ENCODE measurements at regions of chr11 and their contacts with region 1.

Region 1: GRCh38 chr11:45110562-45110961 is 35.9 kb upstream of the PRDM11 start:
- DNase-seq: peak; percentile 76
- H3K4me3 ChIP-seq: peak overlapping the region in 1 of 2 experiments; percentile 20; a peak in 1 of 4 replicates
- H3K27ac ChIP-seq: no peak overlapping the region
- H3K4me1 ChIP-seq: no peaks in the 10 kb centered on the region
- H3K27me3 ChIP-seq: peaks cover 18% of the 10 kb centered on the region; the same call in 1 of the 2 replicates
- CTCF ChIP-seq: peak; percentile 75
- EP300 ChIP-seq: no peak
- RAD21 ChIP-seq: peak; percentile 95

Region 2: GRCh38 chr11:44823006-44823405 is 287.6 kb before region 1 on chr11:
- CTCF ChIA-PET with region 1: no interaction called
- POLR2A ChIA-PET with region 1: no interaction called
- DNase-seq: no peak
- H3K4me3 ChIP-seq: no peak overlapping the region
- H3K27ac ChIP-seq: no peak overlapping the region; a peak in 1 of 4 replicates
- H3K4me1 ChIP-seq: peaks cover 0 to 25% of the 10 kb centered on the region in 2 experiments; a peak in 1 of 4 replicates
- H3K27me3 ChIP-seq: no peaks in the 10 kb centered on the region
- CTCF ChIP-seq: peak; percentile 41
- EP300 ChIP-seq: no peak
- RAD21 ChIP-seq: no peak

Region 3: DNA sequence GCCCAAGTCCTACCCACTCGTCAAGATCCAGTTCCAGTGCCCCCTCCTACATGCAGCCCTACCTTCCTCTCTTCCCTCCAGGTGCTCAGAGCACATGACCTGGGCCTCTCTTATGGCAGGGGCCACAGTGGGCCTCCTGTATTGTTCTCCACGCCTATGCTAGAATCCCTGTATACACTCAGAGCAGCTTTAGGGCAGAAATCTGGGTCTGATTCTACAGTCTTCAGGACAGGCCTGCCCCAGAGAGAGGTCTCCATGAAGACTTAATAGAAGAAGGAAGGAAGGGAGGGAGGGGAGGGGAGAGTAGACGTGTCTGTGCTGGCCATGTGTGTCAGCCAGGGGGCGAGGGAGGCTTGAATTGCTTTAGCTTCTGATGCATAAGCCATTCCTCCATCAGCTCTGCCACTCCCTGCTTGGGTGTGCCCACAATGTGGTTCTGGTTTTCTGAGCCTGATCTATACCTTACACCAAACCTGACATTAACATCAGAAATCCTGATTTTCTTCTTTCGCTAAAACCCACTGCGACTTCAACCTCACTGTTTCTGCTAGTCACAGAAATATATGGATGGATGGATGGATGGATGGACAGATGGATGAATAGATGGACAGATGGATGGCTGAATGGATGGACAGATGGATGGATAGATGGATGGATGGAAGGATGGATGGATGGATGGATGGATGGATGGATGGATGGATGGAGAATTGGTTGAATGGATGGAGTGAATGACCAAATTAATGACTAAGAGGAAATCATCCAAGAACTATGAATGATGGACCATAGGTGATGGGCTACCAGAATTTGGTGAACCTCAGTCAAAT is 20.7 kb before region 1 on chr11:
- CTCF ChIA-PET with region 1: interaction called, 42 read pairs
- POLR2A ChIA-PET with region 1: no interaction called
- DNase-seq: no peak
- H3K4me3 ChIP-seq: no peak overlapping the region
- H3K27ac ChIP-seq: peak overlapping the region in 1 of 2 experiments; percentile 38; a peak in 1 of 4 replicates
- H3K4me1 ChIP-seq: peaks cover 0 to 9% of the 10 kb centered on the region in 2 experiments; a peak in 1 of 4 replicates
- H3K27me3 ChIP-seq: no peaks in the 10 kb centered on the region; the same call in 1 of the 2 replicates
- CTCF ChIP-seq: no peak
- EP300 ChIP-seq: no peak
- RAD21 ChIP-seq: no peak

Region 4: DNA sequence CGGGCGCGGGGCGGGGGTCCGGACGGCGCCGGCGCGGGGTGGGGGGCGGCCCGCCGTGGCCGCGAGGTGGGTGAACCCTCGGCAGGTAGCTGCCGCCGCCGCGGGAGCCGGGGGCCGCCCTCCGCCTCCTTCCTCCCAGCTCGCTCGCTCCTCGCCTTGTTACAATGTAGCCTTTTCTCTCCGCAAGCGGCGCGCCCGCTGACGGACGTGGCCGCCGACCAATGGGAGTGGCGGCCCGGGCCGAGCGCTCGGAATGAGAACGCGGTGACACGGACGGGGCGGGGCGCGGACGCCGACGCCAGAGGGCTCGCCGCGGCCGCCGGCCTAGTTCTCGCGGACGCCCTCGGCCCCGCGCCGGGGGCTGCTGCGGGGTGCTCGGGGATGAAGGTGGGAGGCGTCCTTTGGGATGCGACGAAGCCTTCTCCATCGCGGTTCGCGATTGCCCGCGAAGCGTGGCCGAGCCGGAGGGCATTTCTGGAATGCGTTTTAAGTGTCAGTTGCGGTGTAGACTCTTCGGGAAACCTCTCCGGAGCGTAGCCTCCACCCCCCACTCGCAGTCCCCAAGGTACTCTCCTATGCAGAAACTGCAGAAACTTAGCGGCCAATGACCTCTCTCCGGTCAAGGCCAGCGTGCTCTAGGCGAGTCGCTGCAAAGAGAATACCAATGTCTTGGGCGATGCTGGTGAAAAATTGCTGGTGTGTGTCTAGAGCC is 36.6 kb after region 1 on chr11:
- CTCF ChIA-PET with region 1: interaction called, 11 read pairs
- POLR2A ChIA-PET with region 1: no interaction called
- DNase-seq: peak; percentile 98
- H3K4me3 ChIP-seq: peak overlapping the region; percentile 74 to 81
- H3K27ac ChIP-seq: peak overlapping the region; percentile 68 to 95
- H3K4me1 ChIP-seq: peaks cover 15 to 28% of the 10 kb centered on the region in 2 experiments; a peak in 2 of 4 replicates
- H3K27me3 ChIP-seq: no peaks in the 10 kb centered on the region; the same call in 1 of the 2 replicates
- CTCF ChIP-seq: no peak
- EP300 ChIP-seq: 0 out of 4 replicates have a peak, but pooled peaks of 1 of the 2 experiments have one; percentile 4
- RAD21 ChIP-seq: no peak

Region 5: GRCh38 chr11:45233121-45233803 is 122.7 kb after region 1 on chr11:
- CTCF ChIA-PET with region 1: interaction called, 43 read pairs
- POLR2A ChIA-PET with region 1: no interaction called
- DNase-seq: peak; percentile 91
- H3K4me3 ChIP-seq: no peak overlapping the region
- H3K27ac ChIP-seq: no peak overlapping the region
- H3K4me1 ChIP-seq: peaks cover 0 to 2% of the 10 kb centered on the region in 2 experiments; a peak in 1 of 4 replicates
- H3K27me3 ChIP-seq: no peaks in the 10 kb centered on the region; the same call in 1 of the 2 replicates
- CTCF ChIP-seq: peak; percentile 79
- EP300 ChIP-seq: no peak
- RAD21 ChIP-seq: peak; percentile 53

Region 6: DNA sequence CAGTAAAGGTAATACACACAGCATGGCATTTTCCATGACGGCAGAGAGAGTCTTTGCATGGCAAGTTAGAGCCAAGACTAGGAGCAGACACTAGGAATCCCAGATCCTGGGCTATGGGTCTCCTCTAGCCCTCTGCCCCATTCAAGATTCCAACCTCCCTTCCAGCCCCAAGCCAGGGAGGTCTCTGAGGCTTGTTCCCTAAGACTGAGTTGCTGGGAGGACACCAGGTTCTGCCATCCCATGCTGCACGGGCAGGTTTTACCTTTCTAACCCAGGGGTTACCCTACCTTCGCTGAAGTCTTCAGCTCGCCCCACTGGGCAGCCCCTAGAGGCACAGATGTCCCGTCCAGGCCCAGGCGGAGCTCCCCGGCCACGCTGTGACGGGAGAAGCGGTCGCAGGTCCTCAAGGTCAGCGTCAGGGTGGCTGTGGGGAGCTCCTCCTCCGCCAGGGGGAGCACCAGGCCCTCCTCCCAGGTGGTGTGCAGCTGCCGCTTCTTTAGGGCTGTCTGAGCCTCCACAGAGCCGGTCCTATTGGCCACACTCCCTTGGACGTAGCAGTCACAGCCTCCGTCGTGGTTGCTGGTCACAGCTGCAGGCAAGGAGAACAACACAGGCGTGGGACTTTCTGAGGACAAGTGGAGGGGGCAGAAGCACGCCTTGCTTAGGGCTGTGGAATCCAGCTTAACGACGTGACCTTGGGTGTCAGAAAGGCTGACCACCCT is 141.7 kb after region 1 on chr11:
- CTCF ChIA-PET with region 1: interaction called, 14 read pairs
- POLR2A ChIA-PET with region 1: no interaction called
- DNase-seq: peak; percentile 63
- H3K4me3 ChIP-seq: no peak overlapping the region
- H3K27ac ChIP-seq: no peak overlapping the region
- H3K4me1 ChIP-seq: peaks cover 0 to 3% of the 10 kb centered on the region in 2 experiments; a peak in 1 of 4 replicates
- H3K27me3 ChIP-seq: peaks cover 3% of the 10 kb centered on the region; the same call in 1 of the 2 replicates
- CTCF ChIP-seq: peak; percentile 66
- EP300 ChIP-seq: no peak
- RAD21 ChIP-seq: peak; percentile 37; the same call in 1 of the 2 replicates

Region 7: DNA sequence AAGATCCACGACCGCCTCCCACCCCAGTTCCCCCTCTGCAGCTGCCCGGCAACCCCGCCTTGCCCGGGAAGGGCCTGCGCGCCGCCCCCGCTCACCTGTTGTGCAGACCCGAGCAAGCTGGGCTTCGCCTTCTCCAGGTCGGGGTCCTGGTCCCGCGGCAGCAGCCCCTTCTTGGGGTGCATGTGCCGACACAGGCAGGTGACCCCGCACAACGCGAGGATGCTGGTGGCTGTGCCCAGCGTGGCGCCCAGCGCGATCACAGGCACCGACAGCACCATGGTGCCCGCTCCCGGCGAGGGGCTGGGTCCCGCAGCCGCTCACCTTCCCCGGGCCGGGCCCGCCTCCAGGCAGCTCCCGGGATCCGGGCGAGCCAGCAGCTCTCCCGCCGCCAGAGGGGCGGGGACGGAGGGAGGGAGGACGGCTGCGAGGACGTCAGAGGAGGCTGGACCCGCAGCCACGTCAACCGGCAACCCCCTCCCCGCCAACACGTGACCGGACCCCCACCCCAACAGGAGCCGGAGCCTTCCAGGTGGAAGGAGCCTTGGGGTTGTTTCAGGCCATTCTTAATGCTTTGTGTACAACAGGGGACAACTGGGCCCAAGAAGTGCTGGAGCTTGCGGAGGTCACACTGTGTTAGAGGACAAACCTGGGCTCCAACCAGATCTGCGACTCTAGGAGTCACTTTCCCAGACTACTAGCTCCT is 175.5 kb after region 1 on chr11 and contains the start of gene SYT13:
- CTCF ChIA-PET with region 1: interaction called, 188 read pairs
- POLR2A ChIA-PET with region 1: no interaction called
- DNase-seq: peak; percentile 87
- H3K4me3 ChIP-seq: peak within 1 kb of the TSS in 1 of 2 experiments; percentile 43; a peak in 2 of 4 replicates
- H3K27ac ChIP-seq: no peak within 1 kb of the TSS
- H3K4me1 ChIP-seq: peaks cover 0 to 7% of the 10 kb centered on the region in 2 experiments; a peak in 1 of 4 replicates
- H3K27me3 ChIP-seq: peaks cover 55% of the 10 kb centered on the region
- CTCF ChIP-seq: no peak
- EP300 ChIP-seq: no peak
- RAD21 ChIP-seq: no peak
- polyA plus RNA-seq, gene SYT13: not detected in 2 replicates

Region 8: GRCh38 chr11:45339729-45340519 is 229.4 kb after region 1 on chr11:
- CTCF ChIA-PET with region 1: interaction called, 207 read pairs
- POLR2A ChIA-PET with region 1: no interaction called
- DNase-seq: peak; percentile 90
- H3K4me3 ChIP-seq: peak overlapping the region in 1 of 2 experiments; percentile 22; a peak in 2 of 4 replicates
- H3K27ac ChIP-seq: no peak overlapping the region
- H3K4me1 ChIP-seq: peaks cover 0 to 8% of the 10 kb centered on the region in 2 experiments; a peak in 2 of 4 replicates
- H3K27me3 ChIP-seq: peaks cover 37% of the 10 kb centered on the region; the same call in 1 of the 2 replicates
- CTCF ChIP-seq: peak; percentile 83
- EP300 ChIP-seq: no peak
- RAD21 ChIP-seq: peak; percentile 67